ENCODE measurements at regions of chr11 and their contacts with region 1.

Region 1: DNA sequence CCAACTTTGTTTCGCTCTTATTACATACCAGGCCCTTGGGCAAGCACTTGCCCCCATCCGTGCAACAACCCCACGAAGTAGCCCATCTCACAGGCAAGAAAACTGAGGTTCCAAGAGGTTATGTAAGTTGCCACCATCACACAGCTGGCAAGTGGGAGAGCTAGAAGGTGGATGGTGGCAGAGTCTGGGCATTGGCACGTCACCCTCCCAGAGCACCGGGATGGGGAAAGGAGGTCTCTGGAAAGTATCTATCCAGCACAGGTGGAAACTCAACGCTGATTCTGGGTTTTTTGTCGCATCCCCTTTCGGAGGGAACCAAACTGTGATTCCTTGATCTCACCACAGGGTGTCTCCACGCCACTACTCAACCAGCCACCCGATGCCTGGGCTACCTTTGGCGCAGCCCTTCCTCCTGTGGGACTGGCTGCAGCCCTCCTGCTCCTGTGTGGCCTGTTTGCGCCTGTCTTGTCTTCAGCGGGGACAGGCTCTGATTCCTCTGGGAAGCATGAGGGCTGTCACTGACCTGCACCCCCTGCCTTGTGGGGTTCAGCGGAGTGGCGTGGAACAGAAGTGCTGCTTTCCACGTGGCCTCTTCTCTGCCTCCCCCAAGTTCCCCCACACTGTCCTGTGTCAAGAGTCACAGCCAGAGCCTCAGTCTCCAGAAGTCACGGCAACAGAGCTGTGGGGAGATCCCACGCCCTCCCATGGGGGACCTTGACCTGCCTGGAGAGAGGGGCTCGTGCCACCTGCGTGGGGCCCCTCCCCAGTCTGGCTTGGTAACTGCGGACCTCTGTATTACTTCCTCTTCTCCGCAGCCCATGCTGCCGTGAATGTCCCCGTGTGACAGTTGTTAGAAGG is 34.4 kb upstream of the TRIM29 start:
- DNase-seq: peak; percentile 63
- H3K4me3 Mint-ChIP-seq: no peak overlapping the region
- H3K27ac Mint-ChIP-seq: no peak overlapping the region
- H3K4me1 Mint-ChIP-seq: peaks cover 7% of the 10 kb centered on the region
- H3K27me3 Mint-ChIP-seq: peaks cover 53% of the 10 kb centered on the region

Region 2: DNA sequence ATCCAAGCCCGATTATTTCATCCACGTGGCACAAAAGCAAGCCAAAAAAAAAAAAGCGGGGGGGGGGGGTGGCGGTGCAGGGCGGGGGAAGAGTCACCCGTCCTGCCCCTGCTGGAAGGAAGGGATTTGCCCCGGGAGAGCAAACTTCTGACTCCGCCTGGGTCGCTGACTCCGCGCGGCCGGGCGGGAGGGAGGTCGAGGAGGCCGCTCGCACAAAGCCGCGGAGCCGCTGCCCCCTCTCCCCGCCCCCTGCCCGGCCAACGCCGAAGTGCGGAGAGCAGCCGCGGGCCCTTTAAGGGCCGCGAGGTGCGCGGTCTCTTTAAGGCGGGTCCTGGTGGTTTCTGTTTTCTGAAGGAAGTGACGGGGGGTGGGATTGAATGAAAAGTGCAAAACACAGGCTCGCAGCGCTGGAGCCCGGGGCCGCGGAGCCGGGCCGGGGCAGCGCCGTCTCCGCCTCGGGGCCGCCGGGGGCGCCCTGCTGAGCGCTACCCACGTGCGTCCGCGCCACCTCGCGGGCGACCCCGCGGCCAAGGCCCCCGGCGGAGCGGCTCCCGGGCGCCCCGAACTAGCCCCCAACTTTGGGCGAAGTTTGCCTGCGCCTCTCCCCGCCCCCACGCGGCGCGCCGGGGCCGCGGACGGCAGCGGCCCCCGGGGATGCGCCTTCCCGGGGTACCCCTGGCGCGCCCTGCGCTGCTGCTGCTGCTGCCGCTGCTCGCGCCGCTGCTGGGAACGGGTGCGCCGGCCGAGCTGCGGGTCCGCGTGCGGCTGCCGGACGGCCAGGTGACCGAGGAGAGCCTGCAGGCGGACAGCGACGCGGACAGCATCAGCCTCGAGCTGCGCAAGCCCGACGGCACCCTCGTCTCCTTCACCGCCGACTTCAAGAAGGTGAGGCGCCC is 38.6 kb after region 1 on chr11 and contains the start of gene OAF:
- CTCF ChIA-PET with region 1: interaction called, 4 read pairs
- POLR2A ChIA-PET with region 1: no interaction called
- intact Hi-C with region 1: loop called (anchors 1 kb)
- DNase-seq: peak; percentile 56
- H3K4me3 Mint-ChIP-seq: peak within 1 kb of the TSS; percentile 72
- H3K27ac Mint-ChIP-seq: no peak within 1 kb of the TSS
- H3K4me1 Mint-ChIP-seq: peaks cover 11% of the 10 kb centered on the region
- H3K27me3 Mint-ChIP-seq: peaks cover 28% of the 10 kb centered on the region
- total RNA-seq, gene OAF: 0.90 to 1.2 TPM

Region 3: GRCh38 chr11:120229451-120230424 is 57.5 kb after region 1 on chr11:
- CTCF ChIA-PET with region 1: interaction called, 35 read pairs
- POLR2A ChIA-PET with region 1: no interaction called
- intact Hi-C with region 1: loop called (anchors 1 kb)
- DNase-seq: peak; percentile 34
- H3K4me3 Mint-ChIP-seq: no peak overlapping the region
- H3K27ac Mint-ChIP-seq: no peak overlapping the region
- H3K4me1 Mint-ChIP-seq: no peaks in the 10 kb centered on the region
- H3K27me3 Mint-ChIP-seq: peaks cover 20% of the 10 kb centered on the region

Region 4: DNA sequence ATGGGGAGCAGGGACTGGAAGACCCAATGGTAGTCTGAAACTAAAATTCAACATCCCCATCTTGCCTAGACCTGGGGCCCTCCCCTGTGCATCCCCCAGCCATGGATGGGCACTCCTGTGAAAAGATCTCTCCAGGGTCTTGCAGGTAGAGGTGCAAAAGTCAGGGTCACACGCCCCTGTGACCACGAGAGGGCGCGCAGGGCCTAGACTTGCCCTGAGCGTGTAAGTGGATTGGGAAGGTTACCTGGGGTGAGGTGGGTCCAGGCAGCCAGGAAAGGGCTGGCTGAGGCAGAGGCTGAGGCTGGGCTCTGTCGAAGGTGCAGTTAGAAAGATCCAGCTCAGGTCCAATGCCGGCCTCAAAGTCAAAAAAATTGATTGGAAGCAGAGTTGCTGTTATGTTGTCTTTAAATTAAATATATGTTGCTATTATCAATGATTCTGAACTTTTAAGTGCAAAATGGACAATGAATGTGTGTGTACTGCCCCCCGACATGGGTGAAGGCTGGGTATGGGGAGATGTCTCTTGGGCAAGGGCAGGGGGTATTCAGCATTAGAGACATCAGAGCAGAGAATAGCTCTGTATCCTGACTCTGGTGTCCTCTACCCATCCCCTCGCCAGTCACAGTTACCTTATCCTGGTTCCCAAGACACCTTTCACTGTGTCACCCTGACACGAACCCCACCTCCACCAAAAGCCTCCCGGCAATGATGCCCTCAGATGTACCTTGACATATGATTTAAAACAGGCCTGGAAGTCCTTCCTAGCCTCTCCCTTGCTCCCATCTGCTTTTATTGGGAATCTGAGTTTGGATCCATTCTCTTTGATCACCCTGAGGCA is 63.0 kb after region 1 on chr11:
- CTCF ChIA-PET with region 1: interaction called, 35 read pairs
- POLR2A ChIA-PET with region 1: no interaction called
- intact Hi-C with region 1: no loop called
- DNase-seq: peak; percentile 76
- H3K4me3 Mint-ChIP-seq: no peak overlapping the region
- H3K27ac Mint-ChIP-seq: no peak overlapping the region
- H3K4me1 Mint-ChIP-seq: peaks cover under 1% of the 10 kb centered on the region
- H3K27me3 Mint-ChIP-seq: peaks cover 51% of the 10 kb centered on the region

Measured in activated CD4-positive, alpha-beta memory T cell treated with anti-CD3 and anti-CD28 coated beads for 36 hours (primary cell).